ENCODE measurements at regions of chr12 and their contacts with region 1.

Region 1: DNA sequence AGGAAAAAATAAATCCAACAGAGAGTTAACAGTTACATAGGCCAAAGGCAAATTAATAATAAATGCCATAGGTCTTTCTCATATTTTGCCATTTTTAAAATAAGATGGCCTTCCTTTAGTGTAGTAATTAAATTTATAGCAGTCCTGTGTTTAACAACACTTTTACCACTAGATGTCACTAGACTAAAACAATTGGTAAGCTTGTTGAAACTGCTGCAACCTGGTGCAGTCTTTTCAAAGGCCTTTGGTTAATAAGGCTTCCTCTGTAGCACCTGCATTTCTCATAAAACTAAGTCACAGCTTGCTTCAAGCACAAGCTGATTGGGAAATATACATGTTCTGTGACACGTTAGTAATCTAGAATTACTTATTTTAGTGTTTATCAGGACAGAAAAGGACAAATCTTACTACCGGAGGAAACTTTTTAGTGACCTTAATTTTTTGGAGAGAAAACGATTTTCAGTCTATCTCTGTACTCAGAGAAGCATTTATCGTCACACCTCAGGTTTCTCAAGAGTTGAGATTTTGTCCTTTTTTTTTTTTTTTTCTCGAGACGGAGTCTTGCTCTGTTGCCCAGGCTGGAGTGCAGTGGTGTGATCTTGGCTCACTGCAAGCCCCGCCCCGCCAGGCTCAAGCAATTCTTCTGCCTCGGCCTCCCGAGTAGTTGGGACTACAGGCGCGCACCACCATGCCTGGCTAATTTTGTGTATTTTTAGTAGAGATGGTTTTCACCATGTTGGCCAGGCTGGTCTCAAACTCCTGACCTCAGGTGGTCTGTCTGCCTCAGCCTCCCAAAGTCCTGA is 20.0 kb downstream of the BORCS5 start:
- DNase-seq: peak; percentile 78 to 88 (median 87)
- H3K4me3 ChIP-seq: no peak overlapping the region
- H3K27ac ChIP-seq: no peak overlapping the region
- H3K4me1 ChIP-seq: peaks cover 0 to 4% (median 2%) of the 10 kb centered on the region in 4 experiments
- H3K27me3 ChIP-seq: no peaks in the 10 kb centered on the region

Region 2: GRCh38 chr12:12004524-12004923 is 372.3 kb before region 1 on chr12:
- CTCF ChIA-PET with region 1: no interaction called
- POLR2A ChIA-PET with region 1: no interaction called
- DNase-seq: no peak
- H3K4me3 ChIP-seq: no peak overlapping the region
- H3K27ac ChIP-seq: no peak overlapping the region
- H3K4me1 ChIP-seq: peaks cover 4 to 27% (median 27%) of the 10 kb centered on the region in 4 experiments
- H3K27me3 ChIP-seq: no peaks in the 10 kb centered on the region

Region 3: DNA sequence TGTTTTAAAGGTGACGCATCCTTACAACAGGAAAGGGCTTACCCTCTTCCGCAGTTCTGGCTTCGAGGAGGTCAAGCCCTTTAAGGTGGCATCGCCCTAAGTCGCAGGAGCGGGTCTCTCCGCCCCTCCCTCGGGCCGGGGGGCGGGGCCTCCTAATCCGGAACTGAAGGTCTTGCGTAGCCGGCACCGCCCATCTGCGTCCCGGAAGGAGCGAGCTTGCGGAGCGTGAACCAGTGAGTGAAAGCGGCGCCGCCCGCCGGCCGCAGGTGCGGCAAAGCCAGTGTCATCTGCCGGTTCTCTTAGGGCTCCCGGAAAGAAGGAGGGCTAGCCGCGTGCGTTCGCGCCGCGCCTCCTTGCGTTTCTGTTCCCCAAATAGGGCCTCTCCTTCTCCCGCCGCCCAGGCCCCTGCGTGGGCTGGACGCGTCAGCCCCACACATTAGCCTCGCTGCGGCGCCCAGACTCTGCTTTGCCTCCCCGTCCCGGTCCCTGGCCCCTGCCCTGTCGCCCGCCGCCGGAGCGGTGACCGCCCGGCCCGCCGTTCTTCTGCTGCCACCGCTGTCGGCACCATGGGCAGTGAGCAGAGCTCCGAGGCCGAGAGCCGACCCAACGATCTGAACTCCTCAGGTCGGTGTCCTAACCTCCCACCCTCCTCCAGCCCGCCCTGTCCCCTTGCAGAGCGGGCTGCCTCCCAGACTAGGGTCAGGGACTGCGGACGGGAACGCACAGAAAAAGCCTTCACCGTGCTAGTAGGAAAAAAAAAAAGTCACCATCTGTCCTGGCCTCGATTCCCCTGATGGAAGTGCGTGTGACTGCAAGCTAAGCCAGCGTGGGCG is 19.7 kb before region 1 on chr12 and contains the start of gene BORCS5:
- CTCF ChIA-PET with region 1: interaction called, 18 read pairs
- POLR2A ChIA-PET with region 1: no interaction called
- DNase-seq: peak; percentile 97 to 98 (median 98)
- H3K4me3 ChIP-seq: peak within 1 kb of the TSS; percentile 74 to 93 (median 88)
- H3K27ac ChIP-seq: peak within 1 kb of the TSS; percentile 67 to 90
- H3K4me1 ChIP-seq: peaks cover 12 to 21% (median 16%) of the 10 kb centered on the region in 4 experiments
- H3K27me3 ChIP-seq: no peaks in the 10 kb centered on the region

Region 4: GRCh38 chr12:12387501-12387900 is 10.7 kb after region 1 on chr12:
- CTCF ChIA-PET with region 1: interaction called, 12 read pairs
- POLR2A ChIA-PET with region 1: no interaction called
- DNase-seq: no peak
- H3K4me3 ChIP-seq: no peak overlapping the region
- H3K27ac ChIP-seq: no peak overlapping the region
- H3K4me1 ChIP-seq: peaks cover 0 to 12% (median 3%) of the 10 kb centered on the region in 4 experiments
- H3K27me3 ChIP-seq: no peaks in the 10 kb centered on the region

Region 5: GRCh38 chr12:12645485-12645884 is 268.6 kb after region 1 on chr12:
- CTCF ChIA-PET with region 1: interaction called, 21 read pairs
- POLR2A ChIA-PET with region 1: no interaction called
- DNase-seq: peak; percentile 57 to 75 (median 74)
- H3K4me3 ChIP-seq: no peak overlapping the region
- H3K27ac ChIP-seq: no peak overlapping the region
- H3K4me1 ChIP-seq: no peaks in the 10 kb centered on the region
- H3K27me3 ChIP-seq: no peaks in the 10 kb centered on the region

Region 6: DNA sequence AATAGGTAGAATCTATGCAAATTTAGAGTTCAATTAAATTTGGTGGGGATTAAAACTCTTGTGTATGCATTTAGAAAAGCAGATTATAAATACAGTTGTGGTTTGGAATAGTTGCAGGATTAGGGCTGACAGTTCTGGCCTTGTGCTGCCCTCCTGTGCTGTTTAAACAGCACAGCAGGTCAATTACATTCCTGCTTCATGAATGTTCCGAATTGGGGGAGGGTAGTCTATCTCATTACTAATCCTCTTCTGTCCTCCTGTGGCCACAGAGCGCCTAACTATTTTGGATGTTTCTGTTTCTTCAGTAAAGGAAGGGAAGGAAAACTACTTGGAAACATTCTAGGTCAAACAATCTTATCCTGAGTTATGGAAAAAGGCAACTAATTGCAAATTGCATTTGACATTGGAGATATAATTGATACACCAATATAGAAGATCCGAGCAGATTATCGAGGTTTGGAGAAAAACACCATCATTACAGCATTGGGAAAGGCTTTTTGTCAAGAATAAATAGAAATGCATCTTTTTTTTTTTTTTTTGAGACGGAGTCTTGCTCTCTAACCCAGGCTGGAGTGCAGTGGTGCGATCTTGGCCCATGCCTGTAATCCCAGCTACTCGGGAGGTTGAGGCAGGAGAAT is 327.9 kb after region 1 on chr12:
- CTCF ChIA-PET with region 1: interaction called, 51 read pairs
- POLR2A ChIA-PET with region 1: no interaction called
- DNase-seq: peak; percentile 92 to 95 (median 95)
- H3K4me3 ChIP-seq: no peak overlapping the region
- H3K27ac ChIP-seq: no peak overlapping the region
- H3K4me1 ChIP-seq: peaks cover 25 to 41% (median 34%) of the 10 kb centered on the region in 4 experiments
- H3K27me3 ChIP-seq: no peaks in the 10 kb centered on the region

Measured in common myeloid progenitor, CD34-positive (primary cell).